MCF 10A (cell line): ENCODE measurements at regions of chr1 and their contacts with region 1.

Region 1: DNA sequence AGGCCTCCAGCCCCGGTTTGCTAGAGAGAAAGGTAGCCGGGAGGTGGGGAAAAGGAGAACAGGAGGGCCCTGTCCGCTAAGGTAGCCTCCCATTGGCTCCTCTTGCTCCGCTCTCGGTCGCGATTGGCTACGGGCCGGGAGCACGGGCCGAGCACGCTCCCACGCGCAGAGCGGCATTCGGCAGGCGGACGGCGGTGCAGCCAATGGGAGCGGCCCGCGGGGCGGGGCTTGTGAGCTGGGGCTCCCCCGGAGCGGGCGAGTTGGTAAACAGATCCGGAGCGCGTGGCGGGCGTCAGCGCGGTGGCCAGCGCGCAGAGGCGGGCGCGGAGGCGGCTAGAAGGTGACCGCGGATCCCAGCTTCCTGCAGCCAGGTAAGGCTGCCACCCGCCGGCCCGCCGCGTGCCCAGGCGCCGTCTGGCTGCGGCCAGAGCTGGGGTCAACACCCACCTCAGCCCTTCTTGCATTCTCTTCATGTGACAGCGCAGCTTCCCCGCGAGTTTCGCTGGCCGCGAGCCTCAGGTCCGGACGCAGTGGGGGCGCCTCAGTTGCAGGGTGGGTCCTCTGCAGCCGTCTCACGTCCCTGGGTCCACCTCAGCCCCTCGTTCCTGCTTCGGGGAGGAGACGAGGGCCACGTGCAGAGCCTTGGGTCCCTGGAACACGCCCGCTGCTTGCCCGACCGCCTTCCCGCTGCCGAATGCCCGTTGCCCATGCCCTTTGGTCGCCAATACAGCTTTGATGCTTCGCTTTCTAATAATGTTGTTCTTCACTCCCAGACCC is at the start of gene COQ8A:
- DNase-seq: peak; percentile 100
- H3K4me3 Mint-ChIP-seq: peak within 1 kb of the TSS; percentile 92
- H3K27ac Mint-ChIP-seq: peak within 1 kb of the TSS; percentile 93
- H3K4me1 Mint-ChIP-seq: peaks cover 43% of the 10 kb centered on the region
- H3K27me3 Mint-ChIP-seq: no peaks in the 10 kb centered on the region
- CTCF ChIP-seq: no peak
- total RNA-seq, gene COQ8A: 22.1 and 26.4 TPM in 2 replicates

Region 2: GRCh38 chr1:226875641-226876295 is 64.4 kb before region 1 on chr1:
- CTCF ChIA-PET with region 1: interaction called, 4 read pairs
- POLR2A ChIA-PET with region 1: interaction called, 40 read pairs
- intact Hi-C with region 1: loop called (anchors 5 kb)
- DNase-seq: peak; percentile 91
- H3K4me3 Mint-ChIP-seq: no peak overlapping the region
- H3K27ac Mint-ChIP-seq: peak overlapping the region; percentile 56
- H3K4me1 Mint-ChIP-seq: peaks cover 49% of the 10 kb centered on the region
- H3K27me3 Mint-ChIP-seq: no peaks in the 10 kb centered on the region
- CTCF ChIP-seq: no peak

Region 3: GRCh38 chr1:226920446-226920894 is 19.7 kb before region 1 on chr1:
- CTCF ChIA-PET with region 1: interaction called, 4 read pairs
- POLR2A ChIA-PET with region 1: interaction called, 47 read pairs
- intact Hi-C with region 1: no loop called
- DNase-seq: no peak
- H3K4me3 Mint-ChIP-seq: no peak overlapping the region
- H3K27ac Mint-ChIP-seq: no peak overlapping the region
- H3K4me1 Mint-ChIP-seq: no peaks in the 10 kb centered on the region
- H3K27me3 Mint-ChIP-seq: no peaks in the 10 kb centered on the region
- CTCF ChIP-seq: no peak

Region 4: DNA sequence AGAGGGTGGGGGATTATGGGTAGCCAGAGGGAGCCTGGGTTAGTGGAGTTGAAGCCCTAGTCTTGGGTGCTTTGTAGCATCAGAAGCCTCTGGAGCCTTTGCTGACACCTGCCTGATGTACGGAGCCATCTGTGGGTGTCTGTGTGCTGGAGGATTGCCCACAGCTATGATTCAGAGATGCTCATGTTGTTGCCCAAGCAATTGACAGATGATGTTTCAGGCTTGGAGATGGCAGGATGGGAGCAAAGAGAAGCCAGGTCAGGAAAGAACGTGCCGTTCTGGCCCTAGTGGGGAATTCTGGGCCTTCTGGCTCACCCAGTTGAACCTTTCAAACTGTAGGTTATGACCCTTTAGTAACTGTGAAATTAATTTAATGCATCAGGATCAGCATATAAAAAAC is 27.4 kb after region 1 on chr1:
- CTCF ChIA-PET with region 1: interaction called, 4 read pairs
- POLR2A ChIA-PET with region 1: interaction called, 15 read pairs
- intact Hi-C with region 1: no loop called
- DNase-seq: peak; percentile 94
- H3K4me3 Mint-ChIP-seq: no peak overlapping the region
- H3K27ac Mint-ChIP-seq: no peak overlapping the region
- H3K4me1 Mint-ChIP-seq: peaks cover 10% of the 10 kb centered on the region
- H3K27me3 Mint-ChIP-seq: no peaks in the 10 kb centered on the region
- CTCF ChIP-seq: no peak

Region 5: GRCh38 chr1:227058321-227058751 is 118.1 kb after region 1 on chr1:
- CTCF ChIA-PET with region 1: no interaction called
- POLR2A ChIA-PET with region 1: interaction called, 16 read pairs
- intact Hi-C with region 1: no loop called
- DNase-seq: peak; percentile 72
- H3K4me3 Mint-ChIP-seq: no peak overlapping the region
- H3K27ac Mint-ChIP-seq: peak overlapping the region; percentile 94
- H3K4me1 Mint-ChIP-seq: peaks cover 15% of the 10 kb centered on the region
- H3K27me3 Mint-ChIP-seq: no peaks in the 10 kb centered on the region
- CTCF ChIP-seq: no peak